ENCODE measurements at regions of chr20 and their contacts with region 1.

Region 1: DNA sequence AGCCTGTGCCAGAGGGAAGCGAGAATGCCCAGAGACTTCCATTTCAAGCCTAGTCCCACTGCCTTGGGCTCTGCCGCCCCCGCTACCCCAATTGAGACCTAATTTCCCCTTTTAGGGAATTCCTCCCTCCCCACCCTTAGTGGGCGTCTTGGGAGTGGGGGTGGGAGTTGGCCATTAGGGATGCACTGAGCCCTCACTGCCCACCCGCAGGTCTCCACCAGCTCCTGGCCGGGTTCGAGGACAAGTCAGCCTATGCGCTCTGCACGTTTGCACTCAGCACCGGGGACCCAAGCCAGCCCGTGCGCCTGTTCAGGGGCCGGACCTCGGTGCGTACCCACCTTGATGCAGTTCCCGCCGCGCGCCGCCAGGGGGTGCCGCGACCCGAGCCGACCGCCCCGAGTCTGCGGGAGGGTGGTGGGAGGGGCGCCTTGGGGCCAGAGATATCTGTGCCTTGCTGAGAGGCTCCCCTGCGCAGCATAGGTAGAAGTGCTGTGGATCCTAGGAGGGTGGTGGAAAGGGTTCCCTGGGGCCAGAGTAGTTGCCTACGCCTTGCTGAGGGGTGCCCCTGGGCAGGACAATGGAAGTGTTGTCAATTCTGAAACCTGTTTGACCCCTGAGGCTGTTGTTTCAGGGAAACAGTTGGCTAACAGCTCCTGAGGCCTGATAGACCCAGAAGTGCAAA is 9.2 kb downstream of the ITPA start:
- DNase-seq: peak; percentile 63 to 85 (median 72)
- ATAC-seq: peak; percentile 84
- H3K4me3 ChIP-seq: no peak overlapping the region
- H3K4me3 Mint-ChIP-seq: no peak overlapping the region
- H3K27ac ChIP-seq: no peak overlapping the region
- H3K27ac Mint-ChIP-seq: no peak overlapping the region
- H3K4me1 ChIP-seq: peaks cover 19% of the 10 kb centered on the region
- H3K4me1 Mint-ChIP-seq: peaks cover 19% of the 10 kb centered on the region
- H3K27me3 ChIP-seq: no peaks in the 10 kb centered on the region
- H3K27me3 Mint-ChIP-seq: no peaks in the 10 kb centered on the region
- CTCF ChIP-seq: peak; percentile 88

Region 2: GRCh38 chr20:3041854-3042409 is 176.5 kb before region 1 on chr20:
- CTCF ChIA-PET with region 1: no interaction called
- POLR2A ChIA-PET with region 1: no interaction called
- intact Hi-C with region 1: no loop called
- DNase-seq: no peak
- ATAC-seq: no peak
- H3K4me3 ChIP-seq: no peak overlapping the region
- H3K4me3 Mint-ChIP-seq: no peak overlapping the region
- H3K27ac ChIP-seq: no peak overlapping the region
- H3K27ac Mint-ChIP-seq: peak overlapping the region; percentile 20
- H3K4me1 ChIP-seq: peaks cover 10% of the 10 kb centered on the region
- H3K4me1 Mint-ChIP-seq: peaks cover 13% of the 10 kb centered on the region
- H3K27me3 ChIP-seq: no peaks in the 10 kb centered on the region
- H3K27me3 Mint-ChIP-seq: no peaks in the 10 kb centered on the region
- CTCF ChIP-seq: no peak

Region 3: GRCh38 chr20:3276680-3277015 is 58.2 kb after region 1 on chr20:
- CTCF ChIA-PET with region 1: interaction called, 5 read pairs
- POLR2A ChIA-PET with region 1: no interaction called
- intact Hi-C with region 1: loop called in 1 of 2 experiments (anchors 5 kb)
- DNase-seq: no peak
- ATAC-seq: no peak
- H3K4me3 ChIP-seq: no peak overlapping the region
- H3K4me3 Mint-ChIP-seq: no peak overlapping the region
- H3K27ac ChIP-seq: no peak overlapping the region
- H3K27ac Mint-ChIP-seq: no peak overlapping the region
- H3K4me1 ChIP-seq: no peaks in the 10 kb centered on the region
- H3K4me1 Mint-ChIP-seq: no peaks in the 10 kb centered on the region
- H3K27me3 ChIP-seq: no peaks in the 10 kb centered on the region
- H3K27me3 Mint-ChIP-seq: no peaks in the 10 kb centered on the region
- CTCF ChIP-seq: no peak

Region 4: DNA sequence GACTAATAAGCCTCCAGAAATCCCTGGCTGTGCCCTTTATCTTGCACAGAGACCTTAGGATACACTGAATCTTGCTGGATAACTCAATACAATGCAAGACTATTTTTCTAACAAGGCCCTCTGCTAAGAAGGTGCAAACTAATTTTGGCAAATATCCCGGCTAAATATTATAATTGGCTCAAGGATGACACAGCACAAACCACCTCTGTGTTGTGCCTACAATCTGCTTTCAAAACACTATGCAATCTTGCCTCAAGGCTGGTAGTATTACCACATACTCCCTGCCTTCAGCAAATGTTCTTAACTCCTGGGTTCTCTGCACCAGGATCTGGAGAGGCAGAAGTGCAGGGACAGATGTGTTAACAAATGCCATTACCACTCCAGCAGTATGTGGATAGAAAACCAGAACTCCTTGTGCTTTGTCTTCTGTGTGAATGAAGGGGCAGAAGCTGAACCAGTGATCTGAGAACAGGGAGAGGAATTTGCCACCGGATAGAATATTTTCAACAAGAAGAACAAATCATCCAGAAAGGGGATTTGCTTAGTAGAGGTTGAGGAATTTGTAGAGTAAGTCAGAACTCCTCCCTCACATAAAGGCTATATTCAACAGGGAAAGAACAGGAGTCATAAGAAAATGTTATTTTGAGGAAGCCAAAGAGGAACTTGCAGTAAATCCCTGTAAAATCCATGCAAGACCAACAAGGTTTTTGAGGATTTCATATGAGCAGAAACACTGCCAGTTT is 94.7 kb after region 1 on chr20:
- CTCF ChIA-PET with region 1: interaction called, 23 read pairs
- POLR2A ChIA-PET with region 1: interaction called, 3 read pairs
- intact Hi-C with region 1: loop called in 1 of 2 experiments (anchors 1 kb)
- DNase-seq: no peak
- ATAC-seq: no peak
- H3K4me3 ChIP-seq: no peak overlapping the region
- H3K4me3 Mint-ChIP-seq: no peak overlapping the region
- H3K27ac ChIP-seq: no peak overlapping the region
- H3K27ac Mint-ChIP-seq: peak overlapping the region; percentile 41
- H3K4me1 ChIP-seq: no peaks in the 10 kb centered on the region
- H3K4me1 Mint-ChIP-seq: peaks cover 2% of the 10 kb centered on the region
- H3K27me3 ChIP-seq: no peaks in the 10 kb centered on the region
- H3K27me3 Mint-ChIP-seq: no peaks in the 10 kb centered on the region
- CTCF ChIP-seq: no peak